ENCODE measurements at regions of chr10 and their contacts with region 1.

Region 1: DNA sequence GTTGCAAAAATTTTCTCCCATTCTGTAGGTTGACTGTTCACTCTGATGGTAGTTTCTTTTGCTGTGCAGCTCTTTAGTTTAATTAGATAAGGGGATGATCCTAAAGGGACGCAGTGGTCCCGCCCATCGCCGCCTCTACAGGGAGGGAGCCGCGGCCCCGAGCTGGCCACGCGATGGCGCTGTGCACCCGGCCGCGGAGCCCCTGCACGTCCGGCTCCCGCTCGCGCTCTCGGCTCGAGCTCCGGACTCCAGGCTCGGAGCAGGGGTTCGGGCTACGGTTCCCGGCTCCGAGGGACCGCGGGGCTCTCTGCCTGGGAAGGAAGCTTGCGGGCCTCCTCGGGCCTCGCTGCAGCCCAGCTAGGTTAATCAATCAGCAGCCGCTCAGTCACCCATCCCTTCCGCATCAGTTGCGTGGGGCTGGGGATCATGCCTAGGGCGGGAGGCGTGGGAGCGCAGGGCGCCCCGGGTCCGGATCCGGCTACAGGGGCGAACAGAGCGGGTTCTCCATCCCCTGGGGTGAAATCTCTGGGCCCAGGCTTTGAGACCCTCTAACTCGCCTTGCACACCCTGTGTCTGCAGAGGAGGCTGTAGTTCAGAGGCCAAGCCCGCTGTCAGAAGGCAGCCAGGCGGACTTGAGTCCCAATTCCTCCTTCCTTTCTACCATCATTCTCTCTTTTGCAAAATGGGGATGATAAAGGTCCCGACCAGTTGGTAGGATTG is 97.9 kb downstream of the WDR11 start:
- DNase-seq: peak; percentile 48
- ATAC-seq: peak; percentile 100
- H3K4me3 ChIP-seq: peak overlapping the region in 1 of 2 experiments; percentile 36; a peak in 2 of 4 replicates
- H3K27ac ChIP-seq: no peak overlapping the region
- H3K4me1 ChIP-seq: peaks cover 0 to 4% of the 10 kb centered on the region in 2 experiments; a peak in 2 of 4 replicates
- H3K27me3 ChIP-seq: no peaks in the 10 kb centered on the region; the same call in 1 of the 2 replicates
- CTCF ChIP-seq: peak; percentile 80 to 95 (median 85)
- POLR2A ChIP-seq: no peak
- RAD21 ChIP-seq: peak; percentile 98

Region 2: DNA sequence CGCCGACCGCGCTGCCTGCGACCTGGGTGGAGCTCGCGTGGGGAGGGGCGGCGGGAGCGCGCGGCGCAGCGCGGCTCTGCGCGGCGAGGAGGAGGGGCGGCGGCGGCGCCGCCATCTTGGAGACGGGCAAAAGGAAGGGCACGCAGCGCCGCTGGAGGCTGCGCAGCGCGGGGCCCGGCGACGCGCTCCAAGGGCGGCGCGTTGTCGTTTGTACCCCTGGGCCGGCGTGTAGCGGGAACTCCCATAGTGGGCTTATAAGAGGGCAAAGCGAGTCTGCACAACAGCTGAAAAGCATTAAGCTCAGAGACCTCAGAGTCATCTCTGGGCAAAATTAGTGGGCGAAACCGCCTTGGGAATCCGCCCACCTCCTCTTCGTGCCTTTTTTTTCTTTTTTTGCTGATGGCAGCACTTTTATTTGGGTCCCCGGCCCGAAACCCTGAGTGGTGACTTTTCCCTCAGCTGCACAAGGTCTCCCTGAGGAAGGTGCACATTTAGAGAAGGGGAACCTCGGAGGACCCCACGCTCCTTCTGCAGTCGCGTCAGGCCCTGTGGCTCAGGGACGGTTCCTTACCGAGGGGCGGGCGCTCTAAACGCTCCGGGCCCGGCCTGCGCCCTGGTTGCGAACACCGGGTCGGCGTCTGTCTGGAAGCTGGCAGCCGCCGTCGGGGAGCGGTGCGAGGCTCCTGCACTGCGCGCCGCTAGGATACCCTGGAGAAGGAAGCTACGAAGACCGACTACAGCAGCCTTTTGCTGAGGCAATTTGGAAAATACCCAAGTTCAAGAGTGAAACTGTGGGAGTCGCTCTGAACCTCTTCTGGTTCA is 1076.0 kb before region 1 on chr10:
- CTCF ChIA-PET with region 1: no interaction called
- POLR2A ChIA-PET with region 1: no interaction called
- RAD21 ChIA-PET with region 1: no interaction called
- intact Hi-C with region 1: no loop called
- DNase-seq: peak; percentile 84
- ATAC-seq: peak; percentile 93
- H3K4me3 ChIP-seq: peak overlapping the region; percentile 69 to 76
- H3K27ac ChIP-seq: peak overlapping the region; percentile 90
- H3K4me1 ChIP-seq: peaks cover 13 to 23% of the 10 kb centered on the region in 2 experiments
- H3K27me3 ChIP-seq: no peaks in the 10 kb centered on the region
- CTCF ChIP-seq: 0 out of 6 replicates have a peak, but pooled peaks of 1 of the 3 experiments have one; percentile 2
- POLR2A ChIP-seq: peak; percentile 56
- RAD21 ChIP-seq: no peak

Region 3: GRCh38 chr10:121062115-121062514 is 113.1 kb after region 1 on chr10:
- CTCF ChIA-PET with region 1: no interaction called
- POLR2A ChIA-PET with region 1: no interaction called
- RAD21 ChIA-PET with region 1: no interaction called
- intact Hi-C with region 1: no loop called
- DNase-seq: no peak
- ATAC-seq: no peak
- H3K4me3 ChIP-seq: no peak overlapping the region
- H3K27ac ChIP-seq: no peak overlapping the region
- H3K4me1 ChIP-seq: no peaks in the 10 kb centered on the region
- H3K27me3 ChIP-seq: no peaks in the 10 kb centered on the region
- CTCF ChIP-seq: no peak
- POLR2A ChIP-seq: no peak
- RAD21 ChIP-seq: no peak

Region 4: DNA sequence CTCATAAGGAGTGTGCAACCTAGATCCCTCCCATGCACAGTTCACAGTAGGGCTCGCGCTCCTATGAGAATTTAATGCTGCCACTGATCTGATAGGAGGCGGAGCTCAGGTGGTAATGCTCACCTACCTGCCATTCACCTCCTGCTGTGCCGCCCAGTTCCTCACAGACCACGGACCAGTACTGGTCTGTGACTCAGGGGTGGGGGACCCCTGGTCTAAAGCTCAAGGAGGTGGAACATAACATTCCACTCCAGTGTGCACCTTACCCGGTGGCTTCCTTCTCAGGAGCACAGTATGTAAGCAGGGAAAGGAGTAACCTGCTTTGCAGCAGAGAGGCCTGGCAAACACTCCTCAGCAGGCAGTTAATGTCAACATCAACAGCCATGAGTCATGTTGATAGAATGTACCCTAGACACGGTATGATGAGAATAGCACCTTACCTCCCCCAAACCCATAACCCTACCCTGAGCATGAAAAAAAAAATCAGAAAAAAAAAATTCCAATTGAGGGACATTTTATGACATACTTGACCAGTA is 375.7 kb after region 1 on chr10:
- CTCF ChIA-PET with region 1: no interaction called
- POLR2A ChIA-PET with region 1: no interaction called
- RAD21 ChIA-PET with region 1: no interaction called
- intact Hi-C with region 1: loop called (anchors 1 kb)
- DNase-seq: peak; percentile 75
- ATAC-seq: peak; percentile 81
- H3K4me3 ChIP-seq: peak overlapping the region in 1 of 2 experiments; percentile 43; a peak in 2 of 4 replicates
- H3K27ac ChIP-seq: peak overlapping the region; percentile 53; the same call in 1 of the 2 replicates
- H3K4me1 ChIP-seq: peaks cover 34 to 47% of the 10 kb centered on the region in 2 experiments
- H3K27me3 ChIP-seq: no peaks in the 10 kb centered on the region
- CTCF ChIP-seq: no peak
- POLR2A ChIP-seq: no peak
- RAD21 ChIP-seq: no peak; the same call in 1 of the 2 replicates

Region 5: GRCh38 chr10:121662945-121663917 is 714.2 kb after region 1 on chr10:
- CTCF ChIA-PET with region 1: interaction called, 18 read pairs
- POLR2A ChIA-PET with region 1: no interaction called
- RAD21 ChIA-PET with region 1: interaction called in 1 of 2 experiments, 4 read pairs
- intact Hi-C with region 1: loop called (anchors 10 kb)
- DNase-seq: peak; percentile 22
- ATAC-seq: peak; percentile 87
- H3K4me3 ChIP-seq: no peak overlapping the region
- H3K27ac ChIP-seq: no peak overlapping the region
- H3K4me1 ChIP-seq: peaks cover 0 to 5% of the 10 kb centered on the region in 2 experiments; a peak in 1 of 4 replicates
- H3K27me3 ChIP-seq: no peaks in the 10 kb centered on the region
- CTCF ChIP-seq: peak; percentile 47 to 78 (median 71); a peak in 5 of 6 replicates
- POLR2A ChIP-seq: no peak
- RAD21 ChIP-seq: peak; percentile 71

Region 6: DNA sequence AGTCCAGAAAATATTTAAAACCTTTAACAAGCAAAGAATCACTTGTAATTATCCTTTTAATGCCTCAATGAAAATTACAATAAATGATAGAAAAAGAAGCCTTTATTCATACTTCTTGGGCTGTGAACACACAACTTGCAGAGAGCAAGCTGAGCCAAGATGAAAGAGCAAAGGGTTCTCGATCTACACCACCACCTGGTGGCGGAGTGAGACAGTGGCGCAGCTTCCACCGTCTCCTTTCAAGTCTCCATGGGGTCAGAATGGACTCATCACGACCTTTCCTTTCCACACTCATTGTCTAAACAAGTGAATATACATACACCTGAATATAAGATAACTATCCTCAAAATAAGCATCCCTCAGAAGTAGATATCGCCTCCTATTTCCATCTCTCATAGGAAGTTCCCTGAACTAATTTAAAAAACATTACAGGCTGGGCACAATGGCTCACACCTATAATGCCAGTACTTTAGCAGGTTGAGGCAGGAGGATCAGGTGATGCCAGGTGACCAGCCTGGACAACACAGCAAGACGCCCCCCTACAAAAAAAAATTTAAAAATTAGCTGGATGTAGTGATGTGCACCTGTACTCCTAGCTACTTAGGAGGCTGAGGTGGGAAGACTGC is 938.1 kb after region 1 on chr10:
- CTCF ChIA-PET with region 1: interaction called, 20 read pairs
- POLR2A ChIA-PET with region 1: no interaction called
- RAD21 ChIA-PET with region 1: no interaction called
- intact Hi-C with region 1: no loop called
- DNase-seq: peak; percentile 60
- ATAC-seq: peak; percentile 96
- H3K4me3 ChIP-seq: no peak overlapping the region
- H3K27ac ChIP-seq: no peak overlapping the region
- H3K4me1 ChIP-seq: no peaks in the 10 kb centered on the region
- H3K27me3 ChIP-seq: no peaks in the 10 kb centered on the region
- CTCF ChIP-seq: peak; percentile 80 to 98 (median 92)
- POLR2A ChIP-seq: no peak
- RAD21 ChIP-seq: peak; percentile 88

Measured in HCT116 (cell line).